ENCODE measurements at regions of chr5 and their contacts with region 1.

Region 1: DNA sequence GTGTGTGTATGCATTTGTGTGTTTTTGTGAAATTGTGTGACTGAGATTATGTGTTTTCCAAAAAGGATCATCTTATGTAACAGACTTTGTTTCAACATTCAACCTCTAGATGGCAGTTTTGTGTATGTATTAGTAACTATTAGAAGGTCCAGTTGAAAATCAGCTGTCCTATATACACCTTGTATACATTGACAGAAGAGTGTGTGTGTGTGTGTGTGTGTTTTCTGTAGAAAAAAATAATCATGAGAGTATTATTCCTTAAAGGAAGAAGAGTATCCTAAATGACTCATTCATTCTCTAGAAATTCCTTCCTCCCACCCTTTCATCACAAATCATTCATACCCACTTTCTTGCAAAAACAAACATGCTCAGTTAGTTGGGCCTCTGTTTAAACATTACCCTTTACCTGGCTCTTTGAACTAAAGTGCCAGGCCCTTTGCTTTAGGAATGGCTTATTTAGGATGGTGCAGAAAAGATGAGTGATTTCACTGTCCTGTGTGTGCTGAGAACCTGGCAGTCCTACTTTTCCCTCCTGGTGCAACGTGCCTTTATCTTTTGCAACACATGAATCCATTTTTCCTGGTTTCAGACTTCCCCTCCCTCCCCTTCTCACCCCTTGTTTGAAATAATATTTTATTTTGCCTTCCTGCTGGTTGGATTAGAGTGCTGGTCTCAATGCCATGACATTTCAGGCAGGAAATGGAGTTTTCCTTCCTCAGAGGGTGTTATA is 152.2 kb downstream of the ARHGAP26 start:
- DNase-seq: no peak
- ATAC-seq: peak; percentile 58 to 76
- H3K4me3 ChIP-seq: no peak overlapping the region
- H3K27ac ChIP-seq: peak overlapping the region in 3 of 4 donors; percentile 12 to 22 (median 13)
- H3K4me1 ChIP-seq: peaks cover 8 to 24% of the 10 kb centered on the region in 2 donors
- H3K27me3 ChIP-seq: no peaks in the 10 kb centered on the region
- CTCF ChIP-seq: peak in 4 of 5 experiments; percentile 35 to 57 (median 48)
- POLR2A ChIP-seq: no peak

Region 2: GRCh38 chr5:142758056-142758795 is 164.2 kb before region 1 on chr5:
- in situ Hi-C with region 1: no loop called
- intact Hi-C with region 1: no loop called
- DNase-seq: no peak
- ATAC-seq: no peak
- H3K4me3 ChIP-seq: no peak overlapping the region
- H3K27ac ChIP-seq: no peak overlapping the region
- H3K4me1 ChIP-seq: peaks cover 5 to 12% of the 10 kb centered on the region in 2 donors
- H3K27me3 ChIP-seq: no peaks in the 10 kb centered on the region
- CTCF ChIP-seq: no peak
- POLR2A ChIP-seq: no peak

Region 3: DNA sequence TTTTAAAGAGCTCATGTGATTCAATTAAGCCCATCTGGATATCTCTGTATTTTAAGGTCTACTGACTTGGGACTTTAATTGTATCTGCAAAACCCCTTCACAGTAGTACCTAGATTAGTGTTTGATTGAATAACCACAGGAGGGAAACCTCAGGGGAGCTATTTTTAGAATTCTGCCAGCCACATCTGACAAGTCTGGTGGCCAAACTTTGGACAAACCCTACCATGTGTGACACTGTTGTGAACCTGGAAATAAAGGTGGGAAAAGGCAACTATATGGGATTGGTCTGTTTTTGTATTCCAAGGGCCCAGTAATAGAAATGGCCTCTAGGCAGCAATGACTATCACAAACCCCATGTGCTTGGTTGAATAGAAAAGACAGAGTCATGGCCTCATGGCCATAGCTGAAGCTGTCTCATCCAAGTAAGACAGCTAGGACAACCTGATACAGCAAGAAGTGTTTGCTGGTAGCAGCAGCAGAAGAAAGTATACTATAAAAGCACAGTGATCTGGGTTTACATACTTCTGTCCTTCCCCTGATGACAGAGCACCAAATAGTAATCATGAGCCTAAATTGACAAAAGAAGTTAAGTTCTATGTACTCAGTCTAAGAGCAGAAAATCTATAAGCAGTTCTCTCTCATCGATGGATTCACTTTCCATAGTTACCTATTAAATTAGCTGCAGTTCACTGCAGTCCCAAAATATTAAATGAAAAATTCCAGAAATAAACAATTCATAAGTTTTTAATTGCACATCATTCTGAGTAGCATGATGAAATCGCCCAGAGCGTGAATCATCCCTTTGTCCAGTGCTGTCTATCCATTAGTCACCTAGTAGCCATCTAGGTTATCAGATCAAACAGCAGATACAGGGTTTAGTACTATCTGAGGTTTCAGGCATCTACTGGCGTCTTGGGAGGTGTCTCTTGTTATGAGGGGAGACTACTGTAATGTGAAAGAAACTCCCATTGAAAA is 37.6 kb after region 1 on chr5:
- in situ Hi-C with region 1: loop called in 1 of 4 experiments (anchors 5 kb)
- intact Hi-C with region 1: loop called (anchors 2 kb)
- DNase-seq: no peak
- ATAC-seq: peak; percentile 36 to 51
- H3K4me3 ChIP-seq: no peak overlapping the region
- H3K27ac ChIP-seq: peak overlapping the region in 1 of 4 donors; percentile 6
- H3K4me1 ChIP-seq: peaks cover 40 to 47% of the 10 kb centered on the region in 2 donors
- H3K27me3 ChIP-seq: no peaks in the 10 kb centered on the region
- CTCF ChIP-seq: no peak
- POLR2A ChIP-seq: no peak

Region 4: GRCh38 chr5:143106174-143106573 is 183.8 kb after region 1 on chr5:
- in situ Hi-C with region 1: no loop called
- intact Hi-C with region 1: loop called (anchors 10 kb)
- DNase-seq: peak in 1 of 2 donors; percentile 52
- ATAC-seq: peak; percentile 79 to 81
- H3K4me3 ChIP-seq: no peak overlapping the region
- H3K27ac ChIP-seq: no peak overlapping the region
- H3K4me1 ChIP-seq: peaks cover 35 to 55% of the 10 kb centered on the region in 2 donors
- H3K27me3 ChIP-seq: no peaks in the 10 kb centered on the region
- CTCF ChIP-seq: peak in 2 of 5 experiments; percentile 10 to 29
- POLR2A ChIP-seq: no peak

Region 5: GRCh38 chr5:143491644-143492043 is 569.3 kb after region 1 on chr5:
- in situ Hi-C with region 1: no loop called
- intact Hi-C with region 1: no loop called
- DNase-seq: no peak
- ATAC-seq: no peak
- H3K4me3 ChIP-seq: no peak overlapping the region
- H3K27ac ChIP-seq: no peak overlapping the region
- H3K4me1 ChIP-seq: peaks cover 14 to 27% of the 10 kb centered on the region in 2 donors
- H3K27me3 ChIP-seq: no peaks in the 10 kb centered on the region
- CTCF ChIP-seq: no peak
- POLR2A ChIP-seq: no peak

Region 6: GRCh38 chr5:144170276-144171024 is 1248.1 kb after region 1 on chr5 and contains the starts of genes KCTD16 and YIPF5:
- in situ Hi-C with region 1: loop called in 1 of 4 experiments (anchors 25 kb)
- intact Hi-C with region 1: no loop called
- DNase-seq: peak; percentile 91 to 96
- ATAC-seq: peak; percentile 99 to 100
- H3K4me3 ChIP-seq: peak within 1 kb of the TSS; percentile 79 to 93 (median 88)
- H3K27ac ChIP-seq: peak within 1 kb of the TSS; percentile 79 to 89 (median 84)
- H3K4me1 ChIP-seq: peaks cover 20 to 30% of the 10 kb centered on the region in 2 donors
- H3K27me3 ChIP-seq: no peaks in the 10 kb centered on the region
- CTCF ChIP-seq: no peak
- POLR2A ChIP-seq: peak; percentile 43 to 48
- total RNA-seq, gene KCTD16: 0.02 TPM in 1 of 4 donors, not detected in the others
- total RNA-seq, gene YIPF5: 15.5 to 26.5 (median 19.5) TPM

Measured in gastrocnemius medialis (tissue), 4 donors.